Dorsolateral prefrontal cortex (tissue), 120 donors: ENCODE measurements at regions of chr14 and their contacts with region 1.

Region 1: GRCh38 chr14:91418387-91419043 is 895 bp upstream of the CCDC88C start:
- DNase-seq: peak in 9 of 10 donors; percentile 34 to 77 (median 65)
- H3K4me3 ChIP-seq: peak overlapping the region in 58 of 59 donors; percentile 26 to 74 (median 60)
- H3K27ac ChIP-seq: peak overlapping the region in 1 of 59 donors; percentile 23
- H3K27me3 ChIP-seq: peaks cover 0 to 8% (median 0%) of the 10 kb centered on the region in 45 donors
- CTCF ChIP-seq: peak; percentile 77 to 99 (median 95)

Region 2: DNA sequence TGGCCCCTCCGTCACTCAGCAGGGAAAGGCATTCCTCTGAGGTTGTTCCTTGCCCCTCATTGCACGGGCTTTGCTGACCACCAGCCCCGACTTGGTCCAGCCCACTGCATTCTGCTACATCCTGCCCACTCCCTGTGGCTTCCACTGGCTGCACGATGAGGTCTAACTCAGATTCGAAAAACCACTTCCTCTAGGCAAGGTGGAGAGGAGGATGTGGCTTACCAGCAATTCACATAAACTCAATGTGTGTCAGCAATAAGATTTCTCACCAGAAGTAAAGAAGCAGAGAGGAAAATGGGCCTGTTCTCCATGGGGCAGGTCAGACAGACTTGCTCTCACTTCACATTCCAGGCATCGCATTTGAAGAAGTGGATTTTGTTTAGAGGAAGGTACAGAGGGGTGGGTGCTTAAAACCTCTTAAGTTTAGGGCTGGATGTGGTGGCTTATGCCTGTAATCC is 188.7 kb before region 1 on chr14:
- intact Hi-C with region 1: no loop called
- DNase-seq: no peak
- H3K4me3 ChIP-seq: no peak overlapping the region
- H3K27ac ChIP-seq: no peak overlapping the region
- H3K27me3 ChIP-seq: no peaks in the 10 kb centered on the region
- CTCF ChIP-seq: no peak

Region 3: DNA sequence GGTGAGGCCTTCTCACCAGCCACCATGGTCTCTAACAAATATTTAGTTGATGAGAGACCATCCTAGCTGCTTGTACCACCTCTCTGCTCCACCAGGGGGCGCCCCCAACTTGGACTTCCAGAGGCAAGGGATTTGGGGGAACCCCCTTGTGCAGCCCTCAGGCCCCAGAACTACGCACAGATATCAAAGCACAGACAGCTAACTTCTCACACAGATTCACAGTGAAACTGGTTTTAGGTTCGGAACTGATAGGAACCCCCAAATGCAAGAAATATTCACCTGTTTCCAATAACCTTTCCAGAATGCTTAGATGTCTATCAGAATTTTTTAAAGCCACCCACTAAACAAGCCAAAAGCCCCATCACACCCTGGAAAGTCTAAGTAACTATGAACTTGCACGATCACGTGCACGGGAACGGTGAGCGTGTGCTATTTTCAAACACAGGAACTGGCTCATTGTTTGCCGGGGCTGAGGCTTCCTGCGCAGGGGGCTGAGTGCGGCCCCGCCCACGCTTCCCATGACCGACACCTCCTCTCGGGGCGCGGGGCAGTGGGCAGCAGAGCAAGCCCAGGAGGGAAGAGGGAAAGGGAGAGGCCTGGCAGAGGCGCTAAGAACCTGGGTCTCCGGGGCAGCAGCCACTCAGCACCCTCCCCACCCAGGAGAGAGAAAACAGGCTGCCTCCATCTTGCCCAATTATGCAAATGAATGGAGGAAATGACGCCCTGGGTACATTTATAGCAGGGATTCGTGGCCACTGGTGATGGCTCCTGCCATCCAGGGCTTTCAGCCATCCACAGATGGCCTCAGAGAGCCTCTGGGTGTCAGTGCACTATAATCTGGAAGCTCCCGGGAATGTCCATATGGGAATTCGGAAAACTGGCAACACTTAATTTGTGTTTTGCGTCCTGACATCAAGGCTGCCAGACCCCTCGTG is 94.6 kb before region 1 on chr14:
- intact Hi-C with region 1: loop called (anchors 1 kb)
- DNase-seq: peak; percentile 82 to 94 (median 90)
- H3K4me3 ChIP-seq: peak overlapping the region; percentile 6 to 67 (median 45)
- H3K27ac ChIP-seq: peak overlapping the region in 52 of 59 donors; percentile 10 to 90 (median 62)
- H3K27me3 ChIP-seq: no peaks in the 10 kb centered on the region
- CTCF ChIP-seq: peak; percentile 91 to 99 (median 96)